Uterus (tissue), 4 donors: ENCODE measurements at regions of chr15 and their contacts with region 1.

Region 1: GRCh38 chr15:69475769-69476358 is 23.2 kb downstream of the RPLP1 start:
- DNase-seq: peak; percentile 71 to 79
- H3K4me3 ChIP-seq: no peak overlapping the region
- H3K27ac ChIP-seq: no peak overlapping the region
- H3K4me1 ChIP-seq: no peaks in the 10 kb centered on the region
- H3K27me3 ChIP-seq: no peaks in the 10 kb centered on the region
- CTCF ChIP-seq: peak; percentile 81 to 88 (median 86)
- POLR2A ChIP-seq: no peak

Region 2: GRCh38 chr15:70488002-70488605 is 1012.2 kb after region 1 on chr15:
- intact Hi-C with region 1: loop called (anchors 5 kb)
- DNase-seq: peak; percentile 71 to 80
- H3K4me3 ChIP-seq: no peak overlapping the region
- H3K27ac ChIP-seq: no peak overlapping the region
- H3K4me1 ChIP-seq: no peaks in the 10 kb centered on the region
- H3K27me3 ChIP-seq: no peaks in the 10 kb centered on the region
- CTCF ChIP-seq: peak; percentile 93 to 98 (median 95)
- POLR2A ChIP-seq: no peak

Region 3: DNA sequence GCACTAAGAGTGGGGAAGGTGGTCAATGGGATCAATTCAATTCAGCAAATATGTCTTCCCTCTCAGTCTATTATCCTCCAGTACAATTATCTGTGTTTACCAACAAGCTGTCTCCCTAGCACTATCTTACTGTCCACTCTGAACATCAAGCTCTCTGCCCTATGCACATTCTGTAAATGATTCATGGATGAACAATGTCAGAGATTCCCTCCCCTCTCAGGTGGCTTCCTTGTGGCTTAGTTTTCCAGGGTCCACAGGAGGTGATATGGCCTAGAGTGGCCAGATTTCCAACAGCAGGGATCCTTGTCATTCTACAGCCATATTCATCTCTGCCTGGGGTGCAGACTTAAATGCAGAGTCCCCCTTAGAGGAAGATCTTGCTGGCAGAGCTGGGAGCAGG is 1062.4 kb after region 1 on chr15:
- intact Hi-C with region 1: no loop called
- DNase-seq: no peak
- H3K4me3 ChIP-seq: no peak overlapping the region
- H3K27ac ChIP-seq: no peak overlapping the region
- H3K4me1 ChIP-seq: no peaks in the 10 kb centered on the region
- H3K27me3 ChIP-seq: no peaks in the 10 kb centered on the region
- CTCF ChIP-seq: no peak
- POLR2A ChIP-seq: no peak